CD8-positive, alpha-beta T cell (primary cell): ENCODE measurements at regions of chrX and their contacts with region 1.

Region 1: DNA sequence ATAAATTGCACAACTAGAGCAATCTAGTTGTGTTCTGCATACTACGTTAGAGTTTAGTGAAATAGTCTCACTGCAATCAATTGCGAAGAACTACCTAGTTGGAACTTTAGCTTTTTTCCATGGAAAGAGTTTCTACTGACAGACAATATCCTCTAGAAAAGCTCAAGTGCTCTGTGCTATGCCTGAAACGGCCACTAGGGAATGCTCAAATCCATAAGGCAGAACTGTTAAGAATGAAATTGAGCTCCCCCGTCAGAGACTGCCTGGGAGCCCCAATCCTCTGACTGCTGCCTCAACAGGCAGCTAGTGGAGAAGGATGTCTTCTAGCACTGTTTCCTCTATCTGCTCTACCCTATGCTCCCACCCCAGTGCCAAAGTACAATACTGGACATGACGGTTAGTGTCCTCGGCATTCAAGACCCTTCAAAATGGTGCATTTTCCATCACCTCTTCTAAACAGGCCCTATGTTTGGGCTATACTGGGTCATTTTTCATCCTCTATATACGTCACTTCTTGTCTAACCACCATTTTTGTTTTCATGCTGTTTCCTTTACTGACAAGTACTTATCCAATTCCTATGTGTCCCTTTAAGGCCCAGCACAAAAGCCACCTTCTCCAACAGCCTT is 35.3 kb downstream of the FRMD7 start:
- DNase-seq: peak; percentile 8 to 73 (median 47)
- ATAC-seq: peak; percentile 93
- H3K4me3 ChIP-seq: no peak overlapping the region
- H3K4me3 Mint-ChIP-seq: no peak overlapping the region
- H3K27ac ChIP-seq: no peak overlapping the region
- H3K27ac Mint-ChIP-seq: no peak overlapping the region
- H3K4me1 ChIP-seq: no peaks in the 10 kb centered on the region
- H3K4me1 Mint-ChIP-seq: peaks cover 9% of the 10 kb centered on the region
- H3K27me3 ChIP-seq: no peaks in the 10 kb centered on the region
- H3K27me3 Mint-ChIP-seq: peaks cover 3% of the 10 kb centered on the region
- CTCF ChIP-seq: peak; percentile 58

Region 2: DNA sequence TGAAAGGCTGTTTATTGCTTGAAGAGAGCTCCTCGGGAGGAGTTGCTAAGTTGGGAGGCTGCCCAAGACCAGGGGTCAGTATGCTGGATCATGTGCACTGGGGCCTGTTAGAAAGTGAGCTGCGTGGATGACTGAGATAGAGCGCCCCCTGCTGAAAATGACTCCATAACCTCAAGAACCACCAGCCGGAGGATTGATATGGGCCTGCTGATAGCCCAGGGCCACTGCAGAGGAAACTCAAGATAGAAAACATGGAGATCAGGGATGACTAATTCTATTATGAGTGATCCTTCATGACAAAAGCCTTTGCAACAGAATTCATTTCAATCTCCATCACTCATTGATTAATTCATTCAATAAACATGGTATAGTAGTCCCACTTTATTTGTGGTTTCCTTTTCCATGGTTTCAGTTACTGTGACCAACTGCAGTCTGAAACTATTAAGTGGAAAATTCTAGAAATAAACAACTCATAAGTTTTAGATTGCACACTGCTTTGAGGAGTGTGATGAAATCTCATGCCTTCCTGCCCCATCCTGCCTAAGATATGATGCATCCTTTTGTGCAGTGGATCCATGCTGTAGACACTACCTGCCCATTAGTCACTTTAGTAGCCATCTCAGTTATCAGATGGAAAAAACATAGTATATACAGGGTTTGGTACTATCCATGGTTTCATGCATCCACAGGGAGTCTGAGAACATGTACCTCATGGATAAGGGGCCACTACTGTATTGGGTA is 523.0 kb after region 1 on chrX:
- CTCF ChIA-PET with region 1: interaction called, 3 read pairs
- POLR2A ChIA-PET with region 1: no interaction called
- intact Hi-C with region 1: loop called in 1 of 2 experiments (anchors 5 kb)
- DNase-seq: peak in 8 of 9 experiments; percentile 21 to 64 (median 41)
- ATAC-seq: no peak
- H3K4me3 ChIP-seq: no peak overlapping the region
- H3K4me3 Mint-ChIP-seq: no peak overlapping the region
- H3K27ac ChIP-seq: no peak overlapping the region
- H3K27ac Mint-ChIP-seq: no peak overlapping the region
- H3K4me1 ChIP-seq: no peaks in the 10 kb centered on the region
- H3K4me1 Mint-ChIP-seq: no peaks in the 10 kb centered on the region
- H3K27me3 ChIP-seq: no peaks in the 10 kb centered on the region
- H3K27me3 Mint-ChIP-seq: no peaks in the 10 kb centered on the region
- CTCF ChIP-seq: peak; percentile 15

Region 3: DNA sequence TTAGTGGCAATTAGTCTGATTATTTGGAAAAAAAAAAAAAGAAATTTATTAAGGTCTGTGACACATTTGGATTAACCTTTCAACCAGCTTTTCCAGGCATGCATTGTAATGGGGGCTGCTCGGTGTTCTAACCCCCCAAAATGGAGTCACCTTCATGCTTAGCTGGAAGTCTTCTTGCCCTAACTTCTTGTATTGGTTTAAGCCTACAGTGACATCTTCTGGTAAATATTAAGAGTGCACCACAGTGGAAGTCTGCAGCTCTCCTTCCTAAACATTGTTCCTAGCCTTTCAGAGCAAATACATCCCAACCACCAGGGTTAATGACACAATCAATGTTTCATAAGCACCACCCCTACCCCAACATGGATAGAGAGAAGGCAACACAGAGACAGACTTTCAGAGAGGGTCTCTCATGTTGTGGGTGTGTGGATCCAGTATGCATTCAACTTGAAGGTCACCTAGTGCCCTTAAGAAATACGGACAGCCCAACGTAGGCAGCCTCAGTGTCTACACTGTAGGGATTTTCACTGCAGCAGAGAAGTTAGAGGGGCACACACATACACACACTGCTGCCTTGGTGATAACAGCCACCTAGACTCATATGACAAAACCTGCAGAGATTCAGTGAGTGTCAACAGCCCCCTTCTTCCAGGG is 539.2 kb after region 1 on chrX:
- CTCF ChIA-PET with region 1: interaction called, 5 read pairs
- POLR2A ChIA-PET with region 1: no interaction called
- intact Hi-C with region 1: loop called in 1 of 2 experiments (anchors 5 kb)
- DNase-seq: peak in 2 of 9 experiments; percentile 40 to 56
- ATAC-seq: peak; percentile 48
- H3K4me3 ChIP-seq: no peak overlapping the region
- H3K4me3 Mint-ChIP-seq: no peak overlapping the region
- H3K27ac ChIP-seq: no peak overlapping the region
- H3K27ac Mint-ChIP-seq: no peak overlapping the region
- H3K4me1 ChIP-seq: no peaks in the 10 kb centered on the region
- H3K4me1 Mint-ChIP-seq: no peaks in the 10 kb centered on the region
- H3K27me3 ChIP-seq: no peaks in the 10 kb centered on the region
- H3K27me3 Mint-ChIP-seq: peaks cover 2% of the 10 kb centered on the region
- CTCF ChIP-seq: peak; percentile 28